ENCODE measurements at regions of chr1 and their contacts with region 1.

Region 1: GRCh38 chr1:19485362-19486187 is at the start of gene CAPZB:
- DNase-seq: peak; percentile 86 to 92
- H3K4me3 ChIP-seq: peak within 1 kb of the TSS; percentile 97
- H3K4me3 Mint-ChIP-seq: peak within 1 kb of the TSS; percentile 91
- H3K27ac Mint-ChIP-seq: peak within 1 kb of the TSS; percentile 93
- H3K4me1 ChIP-seq: peaks cover 6% of the 10 kb centered on the region; the same call in 1 of the 2 replicates
- H3K4me1 Mint-ChIP-seq: peaks cover 17% of the 10 kb centered on the region
- H3K27me3 ChIP-seq: no peaks in the 10 kb centered on the region
- H3K27me3 Mint-ChIP-seq: no peaks in the 10 kb centered on the region
- CTCF ChIP-seq: no peak
- total RNA-seq, gene CAPZB: 205 and 223 TPM in 2 replicates

Region 2: DNA sequence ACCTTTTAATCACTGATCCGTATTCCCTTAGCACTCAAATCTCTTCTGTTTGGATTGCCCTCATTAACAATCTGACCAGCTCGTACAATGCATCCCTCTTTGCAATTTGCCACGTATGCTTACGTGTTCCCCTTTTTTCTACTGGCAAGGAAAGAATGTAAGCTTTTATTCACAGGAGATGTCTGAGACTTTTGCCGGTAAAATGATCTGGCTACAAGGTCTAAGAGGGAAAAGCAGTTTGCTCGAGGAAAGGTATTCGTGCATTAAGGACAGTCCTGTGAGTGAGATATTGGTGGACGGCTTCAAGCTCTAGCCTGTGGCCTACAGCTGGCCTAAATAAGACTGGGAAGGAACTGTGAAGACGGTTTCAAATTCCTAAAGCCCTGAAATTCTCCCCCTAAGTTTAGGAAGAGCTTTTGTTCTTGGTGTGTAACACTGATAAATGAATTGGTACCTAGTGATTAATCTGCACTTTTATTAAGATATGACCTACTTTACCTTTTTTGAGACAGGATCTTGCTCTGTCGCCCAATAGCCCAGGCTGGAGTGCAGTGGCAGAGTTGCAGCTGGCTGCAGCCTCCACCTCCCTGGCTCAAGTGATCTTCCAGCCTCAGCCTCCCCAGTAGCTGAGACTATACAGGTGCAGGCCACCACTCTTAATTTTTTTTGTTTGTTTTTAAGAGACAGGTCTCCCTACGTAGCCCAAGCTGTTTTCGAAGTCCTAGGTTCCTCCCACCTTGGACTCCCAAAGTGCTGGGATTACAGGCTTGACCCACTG is 274.6 kb before region 1 on chr1:
- CTCF ChIA-PET with region 1: no interaction called
- POLR2A ChIA-PET with region 1: no interaction called
- intact Hi-C with region 1: no loop called
- DNase-seq: no peak
- H3K4me3 ChIP-seq: peak overlapping the region; percentile 95
- H3K4me3 Mint-ChIP-seq: peak overlapping the region; percentile 92
- H3K27ac Mint-ChIP-seq: peak overlapping the region; percentile 90
- H3K4me1 ChIP-seq: peaks cover 23% of the 10 kb centered on the region
- H3K4me1 Mint-ChIP-seq: peaks cover 15% of the 10 kb centered on the region
- H3K27me3 ChIP-seq: no peaks in the 10 kb centered on the region
- H3K27me3 Mint-ChIP-seq: no peaks in the 10 kb centered on the region
- CTCF ChIP-seq: no peak

Region 3: GRCh38 chr1:19448491-19449439 is 36.8 kb before region 1 on chr1:
- CTCF ChIA-PET with region 1: interaction called, 5 read pairs
- POLR2A ChIA-PET with region 1: interaction called, 8 read pairs
- intact Hi-C with region 1: loop called (anchors 5 kb)
- DNase-seq: no peak
- H3K4me3 ChIP-seq: no peak overlapping the region
- H3K4me3 Mint-ChIP-seq: no peak overlapping the region
- H3K27ac Mint-ChIP-seq: peak overlapping the region; percentile 73
- H3K4me1 ChIP-seq: peaks cover 19% of the 10 kb centered on the region
- H3K4me1 Mint-ChIP-seq: peaks cover 28% of the 10 kb centered on the region
- H3K27me3 ChIP-seq: no peaks in the 10 kb centered on the region
- H3K27me3 Mint-ChIP-seq: no peaks in the 10 kb centered on the region
- CTCF ChIP-seq: no peak

Region 4: GRCh38 chr1:19466112-19466561 is 19.4 kb before region 1 on chr1:
- CTCF ChIA-PET with region 1: no interaction called
- POLR2A ChIA-PET with region 1: interaction called, 12 read pairs
- intact Hi-C with region 1: no loop called
- DNase-seq: no peak
- H3K4me3 ChIP-seq: no peak overlapping the region
- H3K4me3 Mint-ChIP-seq: no peak overlapping the region
- H3K27ac Mint-ChIP-seq: no peak overlapping the region
- H3K4me1 ChIP-seq: peaks cover 26% of the 10 kb centered on the region
- H3K4me1 Mint-ChIP-seq: peaks cover 34% of the 10 kb centered on the region
- H3K27me3 ChIP-seq: no peaks in the 10 kb centered on the region
- H3K27me3 Mint-ChIP-seq: no peaks in the 10 kb centered on the region
- CTCF ChIP-seq: no peak

Region 5: DNA sequence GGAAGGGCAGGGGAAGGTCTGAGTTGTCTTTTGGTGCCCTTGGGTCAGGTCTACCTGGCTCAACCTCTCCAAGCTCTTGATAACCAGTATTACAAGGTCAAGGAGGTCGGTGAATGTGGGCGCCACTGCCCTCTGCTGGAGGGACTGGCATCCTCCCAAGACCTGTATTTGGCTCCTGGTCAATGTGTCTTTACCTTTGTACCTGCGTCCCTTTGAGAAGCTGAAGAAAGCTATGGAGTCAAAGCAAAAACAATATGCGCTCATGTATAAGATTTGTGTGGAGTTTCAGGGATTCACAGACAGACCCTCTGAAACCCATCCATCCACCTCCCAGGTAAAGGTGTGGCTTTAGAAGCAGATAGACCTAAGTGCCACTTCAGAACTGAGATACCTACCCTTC is 96.7 kb after region 1 on chr1:
- CTCF ChIA-PET with region 1: interaction called, 11 read pairs
- POLR2A ChIA-PET with region 1: no interaction called
- intact Hi-C with region 1: loop called (anchors 5 kb)
- DNase-seq: peak; percentile 62 to 72
- H3K4me3 ChIP-seq: no peak overlapping the region
- H3K4me3 Mint-ChIP-seq: no peak overlapping the region
- H3K27ac Mint-ChIP-seq: no peak overlapping the region
- H3K4me1 ChIP-seq: no peaks in the 10 kb centered on the region
- H3K4me1 Mint-ChIP-seq: peaks cover 7% of the 10 kb centered on the region
- H3K27me3 ChIP-seq: no peaks in the 10 kb centered on the region
- H3K27me3 Mint-ChIP-seq: no peaks in the 10 kb centered on the region
- CTCF ChIP-seq: peak; percentile 59 to 63

Region 6: DNA sequence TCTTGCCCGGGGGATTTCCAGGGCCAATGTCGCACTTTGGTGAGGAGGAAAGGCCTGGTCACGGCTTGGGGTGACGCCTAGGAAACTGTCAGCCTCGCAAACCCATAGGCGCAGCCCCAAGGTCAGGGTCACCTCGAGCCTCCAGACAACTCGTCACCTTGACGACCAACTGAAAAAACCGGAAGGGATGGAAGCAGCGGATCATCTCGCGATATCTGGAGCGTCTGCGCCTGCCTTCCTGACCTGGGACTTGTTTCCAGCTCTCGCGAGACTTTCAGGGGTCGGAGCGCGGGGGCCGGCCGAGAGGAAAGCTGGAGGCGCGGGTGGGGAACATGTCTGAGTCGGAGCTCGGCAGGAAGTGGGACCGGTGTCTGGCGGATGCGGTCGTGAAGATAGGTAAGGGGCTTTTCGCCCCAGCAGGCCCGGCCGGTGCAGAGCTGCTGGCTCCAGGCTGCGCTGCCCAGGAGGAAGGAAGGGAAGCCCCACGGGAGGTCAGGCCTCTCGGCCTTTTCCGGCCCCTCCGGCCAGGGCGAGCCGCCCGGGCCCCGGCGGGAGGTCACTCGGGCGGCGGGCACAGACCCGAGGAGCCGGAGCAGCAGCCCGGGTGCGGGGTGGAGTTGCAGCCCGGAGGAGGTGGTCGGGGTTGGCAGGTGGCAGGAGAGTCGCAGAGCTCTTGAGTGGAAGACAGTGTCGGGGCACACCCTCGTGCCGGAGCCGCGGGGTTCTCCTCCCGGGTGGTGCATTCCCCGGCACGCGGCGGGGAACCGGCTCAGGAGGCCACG is 111.3 kb after region 1 on chr1:
- CTCF ChIA-PET with region 1: interaction called, 5 read pairs
- POLR2A ChIA-PET with region 1: no interaction called
- intact Hi-C with region 1: loop called (anchors 5 kb)
- DNase-seq: peak; percentile 94 to 97
- H3K4me3 ChIP-seq: peak overlapping the region; percentile 94
- H3K4me3 Mint-ChIP-seq: peak overlapping the region; percentile 85
- H3K27ac Mint-ChIP-seq: peak overlapping the region; percentile 95
- H3K4me1 ChIP-seq: no peaks in the 10 kb centered on the region
- H3K4me1 Mint-ChIP-seq: peaks cover 5% of the 10 kb centered on the region
- H3K27me3 ChIP-seq: no peaks in the 10 kb centered on the region
- H3K27me3 Mint-ChIP-seq: no peaks in the 10 kb centered on the region
- CTCF ChIP-seq: no peak

Region 7: GRCh38 chr1:19619697-19620384 is 134.3 kb after region 1 on chr1:
- CTCF ChIA-PET with region 1: interaction called, 4 read pairs
- POLR2A ChIA-PET with region 1: interaction called, 14 read pairs
- intact Hi-C with region 1: no loop called
- DNase-seq: peak; percentile 54 to 58
- H3K4me3 ChIP-seq: no peak overlapping the region
- H3K4me3 Mint-ChIP-seq: no peak overlapping the region
- H3K27ac Mint-ChIP-seq: no peak overlapping the region
- H3K4me1 ChIP-seq: peaks cover 30% of the 10 kb centered on the region
- H3K4me1 Mint-ChIP-seq: no peaks in the 10 kb centered on the region
- H3K27me3 ChIP-seq: no peaks in the 10 kb centered on the region
- H3K27me3 Mint-ChIP-seq: no peaks in the 10 kb centered on the region
- CTCF ChIP-seq: no peak

Region 8: GRCh38 chr1:19651141-19651737 is 165.7 kb after region 1 on chr1:
- CTCF ChIA-PET with region 1: interaction called, 7 read pairs
- POLR2A ChIA-PET with region 1: interaction called, 4 read pairs
- intact Hi-C with region 1: loop called (anchors 5 kb)
- DNase-seq: peak; percentile 47 to 62
- H3K4me3 ChIP-seq: no peak overlapping the region
- H3K4me3 Mint-ChIP-seq: no peak overlapping the region
- H3K27ac Mint-ChIP-seq: no peak overlapping the region
- H3K4me1 ChIP-seq: no peaks in the 10 kb centered on the region
- H3K4me1 Mint-ChIP-seq: no peaks in the 10 kb centered on the region
- H3K27me3 ChIP-seq: no peaks in the 10 kb centered on the region
- H3K27me3 Mint-ChIP-seq: no peaks in the 10 kb centered on the region
- CTCF ChIP-seq: peak; percentile 42 to 59

Region 9: DNA sequence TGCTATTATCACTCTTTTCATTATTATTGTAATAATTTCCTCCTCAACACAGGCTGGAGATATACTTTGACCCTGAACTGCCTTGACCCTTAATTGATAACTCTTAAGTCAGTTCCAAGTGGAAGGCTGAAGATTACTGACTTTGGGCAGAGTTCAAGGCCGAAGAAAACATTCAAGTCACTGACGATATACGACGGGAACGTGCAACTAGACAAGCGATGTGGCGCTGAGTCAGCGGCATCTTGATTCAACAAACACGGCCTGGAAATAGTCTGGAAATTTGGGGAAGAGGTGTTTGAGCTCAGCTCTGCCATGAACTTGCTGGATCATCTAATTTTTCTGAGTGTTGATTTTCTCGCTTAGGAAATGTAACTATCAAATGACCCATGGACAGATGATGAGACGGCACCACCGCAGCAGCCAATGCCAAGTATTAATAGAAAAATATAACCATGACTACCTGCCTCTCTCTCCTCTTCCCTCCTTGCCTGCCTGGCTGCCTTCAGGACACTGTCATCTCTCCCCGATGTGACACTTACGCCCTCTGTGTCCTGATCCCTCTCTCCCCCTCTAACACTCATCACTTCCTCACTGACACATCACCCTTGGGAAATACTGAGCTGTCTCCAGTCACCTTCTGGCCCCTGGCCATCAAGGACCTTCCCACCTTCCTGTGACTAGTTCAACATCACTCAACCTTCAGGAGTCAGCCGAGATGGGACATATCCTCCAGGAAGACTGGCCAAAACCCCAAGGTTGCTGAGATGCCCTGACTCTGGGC is 264.7 kb after region 1 on chr1:
- CTCF ChIA-PET with region 1: no interaction called
- POLR2A ChIA-PET with region 1: no interaction called
- intact Hi-C with region 1: no loop called
- DNase-seq: no peak
- H3K4me3 ChIP-seq: no peak overlapping the region
- H3K4me3 Mint-ChIP-seq: no peak overlapping the region
- H3K27ac Mint-ChIP-seq: no peak overlapping the region
- H3K4me1 ChIP-seq: no peaks in the 10 kb centered on the region
- H3K4me1 Mint-ChIP-seq: no peaks in the 10 kb centered on the region
- H3K27me3 ChIP-seq: no peaks in the 10 kb centered on the region
- H3K27me3 Mint-ChIP-seq: no peaks in the 10 kb centered on the region
- CTCF ChIP-seq: no peak

Measured in Caco-2 (cell line).